H1 (cell line): ENCODE measurements at regions of chr6 and their contacts with region 1.

Region 1: DNA sequence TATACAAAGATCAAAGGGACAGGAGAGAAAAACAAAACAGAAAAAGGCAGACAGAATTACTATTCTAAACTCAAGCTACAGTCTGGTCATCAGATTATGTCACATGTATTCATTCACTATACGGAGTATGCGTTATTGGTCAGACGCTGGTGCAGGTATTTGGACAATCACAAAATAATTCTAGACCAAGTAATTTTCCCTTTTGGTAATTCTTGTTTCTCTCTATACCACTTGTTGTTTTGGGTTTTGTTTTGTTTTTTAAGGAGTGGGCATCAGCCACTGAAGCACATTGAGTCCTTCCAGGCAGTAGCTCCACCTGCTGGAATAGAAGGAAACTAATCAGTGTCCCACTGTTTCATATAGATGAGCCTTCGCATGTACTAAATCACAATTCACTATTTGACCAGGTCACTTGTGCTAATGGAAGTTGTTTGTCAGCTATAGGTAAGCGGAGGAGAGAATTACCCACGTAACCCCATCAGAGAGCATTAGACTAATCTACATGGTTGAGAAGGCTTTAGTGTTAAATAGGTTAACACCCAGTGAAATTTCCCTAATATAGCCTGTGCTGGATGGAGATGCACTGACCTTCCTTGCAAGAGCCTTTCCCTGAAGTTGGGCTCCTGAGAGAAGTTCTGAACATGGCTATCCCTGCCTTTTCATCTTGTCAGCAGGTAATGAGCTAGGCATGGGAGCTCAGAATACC is 77.9 kb downstream of the TNFAIP3 start:
- DNase-seq: no peak
- H3K4me3 ChIP-seq: no peak overlapping the region
- H3K27ac ChIP-seq: no peak overlapping the region
- H3K4me1 ChIP-seq: no peaks in the 10 kb centered on the region
- H3K27me3 ChIP-seq: no peaks in the 10 kb centered on the region
- CTCF ChIP-seq: peak in 2 of 3 experiments; percentile 65 to 76; a peak in 3 of 4 replicates
- EP300 ChIP-seq: no peak
- POLR2A ChIP-seq: no peak
- RAD21 ChIP-seq: peak; percentile 72 to 78

Region 2: DNA sequence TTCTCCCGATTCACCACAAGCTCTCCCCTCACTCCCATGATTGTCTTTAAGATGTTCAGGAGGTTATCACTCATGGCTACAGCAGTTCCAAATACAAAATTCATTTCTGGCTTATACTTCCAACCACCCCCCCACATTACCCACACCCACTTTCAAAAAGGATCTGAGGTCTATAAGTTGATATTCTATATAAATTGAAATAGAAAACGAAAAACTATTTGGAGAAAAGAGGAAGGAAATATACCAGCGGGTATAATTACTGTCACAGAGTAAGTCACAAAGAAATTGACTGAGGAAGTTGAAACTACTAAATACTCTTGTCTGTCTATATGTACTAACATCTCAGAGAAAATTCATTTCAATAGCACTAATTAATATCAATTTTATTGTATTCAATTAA is 190.6 kb before region 1 on chr6:
- CTCF ChIA-PET with region 1: no interaction called
- POLR2A ChIA-PET with region 1: no interaction called
- DNase-seq: no peak
- H3K4me3 ChIP-seq: no peak overlapping the region
- H3K27ac ChIP-seq: no peak overlapping the region
- H3K4me1 ChIP-seq: no peaks in the 10 kb centered on the region
- H3K27me3 ChIP-seq: no peaks in the 10 kb centered on the region
- CTCF ChIP-seq: no peak
- EP300 ChIP-seq: no peak
- POLR2A ChIP-seq: no peak
- RAD21 ChIP-seq: no peak

Region 3: DNA sequence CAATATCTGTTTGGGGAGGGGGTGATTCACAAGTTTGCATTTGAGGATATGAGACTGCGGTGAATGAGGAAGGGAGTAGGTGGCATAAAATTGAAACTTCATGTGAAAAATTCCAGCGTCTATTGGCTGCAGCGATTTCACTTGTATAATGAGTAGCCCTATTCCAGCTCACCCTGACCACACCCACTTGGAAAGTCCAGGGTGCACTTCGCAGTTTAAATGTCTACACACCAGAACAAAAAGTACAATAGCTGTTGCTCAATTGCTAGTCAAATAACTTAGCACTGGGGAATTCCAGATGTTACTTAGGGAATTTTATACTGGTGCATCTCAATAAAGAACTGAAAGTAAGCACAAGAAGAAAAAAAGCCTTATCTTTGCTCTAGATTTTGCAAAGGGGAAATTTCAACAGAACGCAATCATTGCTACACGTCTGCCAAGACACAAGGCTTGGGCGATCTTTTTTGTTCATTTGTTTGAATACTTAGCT is 71.6 kb before region 1 on chr6:
- CTCF ChIA-PET with region 1: interaction called, 18 read pairs
- POLR2A ChIA-PET with region 1: interaction called, 3 read pairs
- DNase-seq: no peak
- H3K4me3 ChIP-seq: no peak overlapping the region
- H3K27ac ChIP-seq: no peak overlapping the region
- H3K4me1 ChIP-seq: no peaks in the 10 kb centered on the region
- H3K27me3 ChIP-seq: peaks cover 0 to 1% (median under 1%) of the 10 kb centered on the region in 4 experiments; a peak in 2 of 7 replicates
- CTCF ChIP-seq: no peak
- EP300 ChIP-seq: no peak
- POLR2A ChIP-seq: no peak
- RAD21 ChIP-seq: no peak

Region 4: GRCh38 chr6:137903933-137904821 is 40.8 kb before region 1 on chr6:
- CTCF ChIA-PET with region 1: no interaction called
- POLR2A ChIA-PET with region 1: no interaction called
- DNase-seq: no peak
- H3K4me3 ChIP-seq: no peak overlapping the region
- H3K27ac ChIP-seq: no peak overlapping the region
- H3K4me1 ChIP-seq: no peaks in the 10 kb centered on the region
- H3K27me3 ChIP-seq: no peaks in the 10 kb centered on the region
- CTCF ChIP-seq: no peak
- EP300 ChIP-seq: no peak
- POLR2A ChIP-seq: no peak
- RAD21 ChIP-seq: no peak

Region 5: GRCh38 chr6:137921823-137922222 is 23.1 kb before region 1 on chr6:
- CTCF ChIA-PET with region 1: interaction called, 13 read pairs
- POLR2A ChIA-PET with region 1: no interaction called
- DNase-seq: no peak
- H3K4me3 ChIP-seq: no peak overlapping the region
- H3K27ac ChIP-seq: no peak overlapping the region
- H3K4me1 ChIP-seq: peaks cover 0 to 17% (median 6%) of the 10 kb centered on the region in 4 experiments; a peak in 5 of 7 replicates
- H3K27me3 ChIP-seq: peaks cover 0 to 2% (median 0%) of the 10 kb centered on the region in 4 experiments; a peak in 1 of 7 replicates
- CTCF ChIP-seq: peak in 2 of 3 experiments; percentile 36 to 44; a peak in 2 of 4 replicates
- EP300 ChIP-seq: no peak
- POLR2A ChIP-seq: no peak
- RAD21 ChIP-seq: peak in 1 of 2 experiments; percentile 34; a peak in 1 of 4 replicates

Region 6: DNA sequence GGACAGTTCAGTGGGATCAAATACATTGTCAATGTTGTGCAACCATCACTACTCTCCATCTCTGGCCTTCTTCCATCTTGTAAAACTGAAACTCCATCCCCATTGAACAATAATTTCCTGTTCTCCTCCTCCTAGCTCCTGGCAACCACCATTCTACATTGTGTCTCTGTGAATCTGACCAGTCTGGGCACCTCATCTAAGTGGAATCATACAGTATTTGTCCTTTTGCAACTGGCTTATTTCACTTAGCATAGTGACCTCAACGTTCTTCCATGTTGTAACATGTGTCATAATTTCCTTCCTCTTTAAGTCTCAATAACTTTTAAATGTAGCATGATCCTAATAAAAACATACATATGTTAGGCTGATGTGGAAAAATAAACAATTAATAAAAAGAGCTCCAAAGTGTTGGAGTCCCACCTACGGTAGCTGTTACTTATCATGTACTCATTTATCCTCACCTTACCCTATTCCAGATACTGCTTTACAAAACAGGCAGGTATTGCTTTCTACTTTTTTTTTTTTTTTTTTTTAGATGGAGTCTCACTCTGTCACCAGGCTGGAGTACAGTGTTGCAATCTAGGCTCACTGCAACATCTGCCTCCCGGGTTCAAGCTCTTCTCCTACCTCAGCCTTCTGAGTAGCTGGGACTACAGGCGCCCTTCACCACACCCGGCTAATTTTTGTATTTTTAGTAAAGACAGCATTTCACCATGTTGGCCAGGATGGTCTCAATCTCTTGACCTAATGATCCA is 14.0 kb after region 1 on chr6:
- CTCF ChIA-PET with region 1: interaction called, 14 read pairs
- POLR2A ChIA-PET with region 1: no interaction called
- DNase-seq: no peak
- H3K4me3 ChIP-seq: no peak overlapping the region
- H3K27ac ChIP-seq: no peak overlapping the region
- H3K4me1 ChIP-seq: peaks cover 0 to 3% (median 0%) of the 10 kb centered on the region in 4 experiments; a peak in 1 of 7 replicates
- H3K27me3 ChIP-seq: peaks cover 0 to 1% (median 0%) of the 10 kb centered on the region in 4 experiments; a peak in 1 of 7 replicates
- CTCF ChIP-seq: no peak
- EP300 ChIP-seq: no peak
- POLR2A ChIP-seq: no peak
- RAD21 ChIP-seq: no peak

Region 7: DNA sequence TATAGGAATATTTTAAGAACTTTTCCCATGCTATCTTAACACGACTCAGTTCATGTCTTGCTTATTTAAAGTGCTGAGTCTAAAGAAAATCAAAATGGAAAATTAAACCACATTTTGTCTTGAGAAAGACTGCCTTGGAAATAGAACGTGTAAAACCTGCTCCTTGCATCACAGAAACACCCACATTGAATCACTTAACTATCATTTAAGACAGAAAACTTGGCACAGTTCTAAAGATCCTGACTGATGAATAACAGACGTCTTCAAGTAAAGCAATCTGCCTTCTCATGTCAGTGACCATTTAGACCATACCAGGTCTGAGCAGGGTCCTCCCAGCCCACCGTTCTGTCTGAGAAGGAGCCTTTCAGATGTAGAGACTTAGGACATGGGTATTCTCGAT is 154.9 kb after region 1 on chr6:
- CTCF ChIA-PET with region 1: no interaction called
- POLR2A ChIA-PET with region 1: no interaction called
- DNase-seq: no peak
- H3K4me3 ChIP-seq: no peak overlapping the region
- H3K27ac ChIP-seq: no peak overlapping the region
- H3K4me1 ChIP-seq: peaks cover 0 to 4% (median 1%) of the 10 kb centered on the region in 4 experiments; a peak in 3 of 7 replicates
- H3K27me3 ChIP-seq: no peaks in the 10 kb centered on the region
- CTCF ChIP-seq: no peak
- EP300 ChIP-seq: no peak
- POLR2A ChIP-seq: no peak
- RAD21 ChIP-seq: no peak